ENCODE measurements at regions of chr2 and their contacts with region 1.

Region 1: GRCh38 chr2:195656859-195657633 is at the start of gene SLC39A10:
- DNase-seq: peak; percentile 98 to 99
- H3K4me3 ChIP-seq: peak within 1 kb of the TSS; percentile 74 to 90
- H3K27ac ChIP-seq: peak within 1 kb of the TSS; percentile 97
- H3K4me1 ChIP-seq: peaks cover 0 to 21% (median 11%) of the 10 kb centered on the region in 4 donors
- H3K27me3 ChIP-seq: no peaks in the 10 kb centered on the region
- CTCF ChIP-seq: peak in 1 of 2 experiments; percentile 28

Region 2: DNA sequence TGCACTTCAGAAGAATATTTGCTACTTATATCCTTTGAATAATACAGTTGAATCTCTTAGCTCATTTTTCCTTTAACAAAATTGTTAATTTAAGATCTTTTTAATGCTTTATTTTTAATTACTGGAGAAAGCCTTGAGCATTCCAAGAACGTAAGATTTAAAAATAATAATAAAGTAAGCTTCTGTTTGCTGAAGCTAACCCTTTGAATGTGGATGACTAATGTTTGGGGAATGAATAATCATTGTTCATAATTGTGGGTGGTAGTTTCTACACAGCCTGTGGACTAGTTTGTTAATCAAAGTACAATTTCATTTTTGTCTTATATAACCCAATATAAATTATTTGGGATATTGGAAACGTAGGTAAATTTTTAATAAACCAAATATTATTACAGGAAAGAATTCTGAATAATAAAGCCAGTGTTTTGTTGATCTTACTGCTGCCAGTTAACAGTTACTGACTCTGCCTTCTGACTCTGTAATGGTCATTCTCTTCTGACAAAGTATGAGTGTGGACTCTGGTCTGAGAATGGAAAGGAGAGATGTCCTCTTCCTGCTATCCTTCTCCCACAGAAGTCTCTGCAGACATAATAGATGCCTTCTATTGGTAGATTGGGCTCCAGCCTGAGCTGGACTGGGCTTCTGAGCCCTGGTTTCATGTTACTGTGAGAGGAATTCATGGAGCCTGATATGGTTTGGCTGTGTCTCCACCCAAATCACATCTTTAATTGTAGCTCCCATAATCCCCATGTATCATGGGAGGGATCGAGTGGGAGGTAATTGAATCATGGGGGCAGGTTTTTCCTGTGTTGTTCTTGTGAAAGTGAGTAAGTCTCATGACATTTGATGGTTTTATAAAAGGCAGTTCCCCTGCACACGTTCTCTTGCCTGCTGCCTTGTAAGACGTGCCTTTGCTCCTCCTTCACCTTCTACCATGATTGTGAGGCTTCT is 292.8 kb before region 1 on chr2:
- intact Hi-C with region 1: no loop called
- DNase-seq: no peak
- H3K4me3 ChIP-seq: no peak overlapping the region
- H3K27ac ChIP-seq: no peak overlapping the region
- H3K4me1 ChIP-seq: no peaks in the 10 kb centered on the region
- H3K27me3 ChIP-seq: no peaks in the 10 kb centered on the region
- CTCF ChIP-seq: no peak

Region 3: GRCh38 chr2:195407782-195408181 is 249.3 kb before region 1 on chr2:
- intact Hi-C with region 1: loop called (anchors 10 kb)
- DNase-seq: no peak
- H3K4me3 ChIP-seq: no peak overlapping the region
- H3K27ac ChIP-seq: no peak overlapping the region
- H3K4me1 ChIP-seq: no peaks in the 10 kb centered on the region
- H3K27me3 ChIP-seq: no peaks in the 10 kb centered on the region
- CTCF ChIP-seq: no peak

Region 4: GRCh38 chr2:195813421-195813820 is 156.4 kb after region 1 on chr2:
- intact Hi-C with region 1: no loop called
- DNase-seq: no peak
- H3K4me3 ChIP-seq: no peak overlapping the region
- H3K27ac ChIP-seq: no peak overlapping the region
- H3K4me1 ChIP-seq: no peaks in the 10 kb centered on the region
- H3K27me3 ChIP-seq: no peaks in the 10 kb centered on the region
- CTCF ChIP-seq: no peak

Region 5: DNA sequence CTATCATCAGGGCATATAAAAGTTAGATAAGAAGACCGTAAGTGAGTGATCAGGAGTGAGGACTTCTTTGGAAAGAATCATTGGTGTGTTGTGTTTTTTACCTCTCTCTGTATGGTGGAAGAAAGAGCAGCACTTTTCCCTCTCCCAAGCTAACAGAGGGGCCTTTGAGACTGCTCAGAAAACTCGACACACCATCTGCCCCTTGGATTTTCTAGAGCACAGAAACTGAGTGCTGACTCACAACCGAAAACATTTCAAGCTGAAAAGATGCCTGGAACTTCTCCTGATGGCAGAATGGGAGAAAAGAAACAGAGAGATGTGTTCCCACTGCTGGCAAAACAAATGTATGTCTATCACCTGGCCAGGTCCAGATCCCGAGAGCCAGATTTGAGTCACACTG is 255.0 kb after region 1 on chr2:
- intact Hi-C with region 1: no loop called
- DNase-seq: no peak
- H3K4me3 ChIP-seq: no peak overlapping the region
- H3K27ac ChIP-seq: no peak overlapping the region
- H3K4me1 ChIP-seq: no peaks in the 10 kb centered on the region
- H3K27me3 ChIP-seq: no peaks in the 10 kb centered on the region
- CTCF ChIP-seq: no peak

Region 6: DNA sequence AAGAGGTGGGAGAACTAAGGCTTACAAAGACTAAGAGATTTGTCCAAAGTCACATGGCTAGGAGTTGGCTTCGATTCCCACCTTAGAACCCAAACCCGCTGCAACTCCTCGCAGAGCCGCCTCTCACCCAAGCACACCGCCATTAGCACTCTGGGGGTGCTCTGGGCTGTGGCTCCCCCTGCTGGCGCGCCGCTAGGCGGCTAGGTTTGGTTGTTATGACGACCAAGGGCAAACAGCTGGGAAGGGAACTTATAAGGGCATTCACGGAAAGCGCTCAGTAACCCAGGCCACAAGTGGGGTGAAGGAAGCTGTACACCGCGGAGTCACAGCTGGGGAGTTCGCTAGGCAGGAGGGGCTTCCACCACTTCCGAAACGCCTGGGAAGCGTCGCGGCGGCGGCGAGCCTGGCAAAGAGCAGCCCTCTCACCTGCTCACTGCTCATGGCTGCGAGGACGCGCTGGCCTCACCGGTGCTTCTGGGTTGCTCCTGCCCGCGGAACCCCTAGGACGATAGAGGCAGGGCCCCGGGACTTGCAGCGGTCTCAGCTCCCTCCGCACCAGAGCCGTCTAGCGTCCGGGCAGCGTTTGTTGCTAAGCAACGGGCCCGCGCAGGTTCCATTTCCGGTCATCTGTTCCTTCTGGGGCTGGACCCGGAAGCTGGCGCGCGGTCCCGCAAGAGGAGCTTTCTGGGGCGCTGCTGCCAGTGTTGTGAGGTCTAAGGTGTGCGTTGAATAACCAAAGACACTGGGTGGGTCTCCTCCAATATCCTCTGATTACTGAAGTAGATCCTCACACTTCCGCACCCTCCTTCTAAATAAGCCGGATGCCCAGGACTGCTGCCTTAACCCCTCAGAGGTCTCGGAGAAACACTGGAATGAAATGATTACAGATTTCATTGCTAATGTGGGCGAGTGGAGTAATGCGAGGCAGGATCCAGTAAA is 411.5 kb after region 1 on chr2 and contains the start of gene DNAH7:
- intact Hi-C with region 1: loop called (anchors 10 kb)
- DNase-seq: peak; percentile 86 to 93
- H3K4me3 ChIP-seq: peak within 1 kb of the TSS; percentile 67 to 71
- H3K27ac ChIP-seq: peak within 1 kb of the TSS; percentile 60 to 65
- H3K4me1 ChIP-seq: peaks cover 0 to 11% (median 4%) of the 10 kb centered on the region in 4 donors
- H3K27me3 ChIP-seq: no peaks in the 10 kb centered on the region
- CTCF ChIP-seq: peak; percentile 56 to 67